PC-9 (cell line): ENCODE measurements at regions of chr7 and their contacts with region 1.

Region 1: DNA sequence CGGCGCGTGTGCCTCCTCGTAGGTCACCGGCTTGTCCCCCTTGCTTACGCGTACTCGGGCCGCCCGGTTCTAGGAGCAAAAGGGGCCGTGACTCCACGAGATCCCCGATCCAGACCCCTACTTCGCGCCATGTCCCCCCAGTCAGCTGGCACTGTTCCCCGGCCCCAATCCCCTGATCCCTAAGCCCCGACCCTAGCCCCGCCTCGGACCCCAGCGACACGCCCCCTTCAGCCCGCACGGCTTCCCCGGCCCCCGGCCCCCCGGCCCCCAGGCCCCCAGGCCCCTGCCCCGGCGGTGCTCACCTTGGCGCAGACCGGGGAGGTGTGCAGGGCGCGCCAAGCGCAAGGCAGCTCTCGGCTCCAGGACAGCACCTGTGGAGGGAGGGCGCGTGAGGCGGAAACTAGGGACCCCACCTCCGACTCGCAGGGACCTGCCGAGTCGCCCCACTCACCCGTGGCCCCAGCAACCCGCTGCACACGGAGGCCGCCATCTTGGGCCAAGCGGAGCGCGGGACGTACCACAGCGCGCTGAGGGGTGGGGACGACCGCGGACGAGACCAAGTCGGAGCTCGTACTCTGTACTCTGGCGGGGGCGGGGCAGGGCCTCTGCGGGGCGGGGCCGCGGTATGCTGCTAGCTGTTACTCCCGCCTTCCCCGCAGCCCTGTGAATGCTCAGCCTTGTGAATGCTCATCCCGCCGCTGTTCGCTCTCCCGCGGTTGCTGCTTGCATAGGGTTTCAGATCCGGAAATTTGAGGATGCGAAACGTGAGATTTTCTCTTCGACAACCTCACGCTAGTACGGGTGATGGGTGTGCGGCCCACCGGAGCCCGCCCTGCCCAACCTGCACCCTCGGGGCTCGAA is at the start of gene MRPS24:
- DNase-seq: peak; percentile 87 to 94
- H3K4me3 ChIP-seq: peak within 1 kb of the TSS; percentile 69
- H3K27ac ChIP-seq: peak within 1 kb of the TSS; percentile 95
- H3K4me1 ChIP-seq: peaks cover 58% of the 10 kb centered on the region
- H3K27me3 ChIP-seq: no peaks in the 10 kb centered on the region
- CTCF ChIP-seq: no peak
- total RNA-seq, gene MRPS24: 239 and 301 TPM in 2 replicates

Region 2: GRCh38 chr7:43808135-43808809 is 61.0 kb before region 1 on chr7:
- CTCF ChIA-PET with region 1: no interaction called
- POLR2A ChIA-PET with region 1: no interaction called
- intact Hi-C with region 1: no loop called
- DNase-seq: no peak
- H3K4me3 ChIP-seq: no peak overlapping the region
- H3K27ac ChIP-seq: no peak overlapping the region
- H3K4me1 ChIP-seq: no peaks in the 10 kb centered on the region
- H3K27me3 ChIP-seq: no peaks in the 10 kb centered on the region
- CTCF ChIP-seq: no peak

Region 3: DNA sequence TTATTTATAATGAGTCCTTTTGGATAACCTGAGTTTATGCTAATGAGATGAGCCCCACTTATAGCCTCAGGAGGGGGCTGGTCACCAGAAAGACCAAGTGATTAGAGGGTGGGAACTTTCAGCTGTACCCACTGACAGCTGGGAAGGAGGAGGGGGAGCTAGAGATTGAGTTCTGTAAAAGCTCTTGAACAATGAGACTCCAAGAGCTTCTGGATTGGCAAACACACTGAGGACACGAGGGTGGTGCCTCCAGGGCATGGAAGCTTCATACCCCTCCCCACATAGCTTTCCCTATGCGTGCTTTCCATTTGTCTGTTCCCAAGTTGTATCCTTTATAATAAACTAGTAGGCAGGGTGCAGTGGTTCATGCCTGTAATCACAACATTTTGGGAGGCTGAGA is 20.2 kb before region 1 on chr7:
- CTCF ChIA-PET with region 1: no interaction called
- POLR2A ChIA-PET with region 1: no interaction called
- intact Hi-C with region 1: loop called (anchors 2 kb)
- DNase-seq: no peak
- H3K4me3 ChIP-seq: no peak overlapping the region
- H3K27ac ChIP-seq: no peak overlapping the region
- H3K4me1 ChIP-seq: no peaks in the 10 kb centered on the region
- H3K27me3 ChIP-seq: no peaks in the 10 kb centered on the region
- CTCF ChIP-seq: no peak

Region 4: DNA sequence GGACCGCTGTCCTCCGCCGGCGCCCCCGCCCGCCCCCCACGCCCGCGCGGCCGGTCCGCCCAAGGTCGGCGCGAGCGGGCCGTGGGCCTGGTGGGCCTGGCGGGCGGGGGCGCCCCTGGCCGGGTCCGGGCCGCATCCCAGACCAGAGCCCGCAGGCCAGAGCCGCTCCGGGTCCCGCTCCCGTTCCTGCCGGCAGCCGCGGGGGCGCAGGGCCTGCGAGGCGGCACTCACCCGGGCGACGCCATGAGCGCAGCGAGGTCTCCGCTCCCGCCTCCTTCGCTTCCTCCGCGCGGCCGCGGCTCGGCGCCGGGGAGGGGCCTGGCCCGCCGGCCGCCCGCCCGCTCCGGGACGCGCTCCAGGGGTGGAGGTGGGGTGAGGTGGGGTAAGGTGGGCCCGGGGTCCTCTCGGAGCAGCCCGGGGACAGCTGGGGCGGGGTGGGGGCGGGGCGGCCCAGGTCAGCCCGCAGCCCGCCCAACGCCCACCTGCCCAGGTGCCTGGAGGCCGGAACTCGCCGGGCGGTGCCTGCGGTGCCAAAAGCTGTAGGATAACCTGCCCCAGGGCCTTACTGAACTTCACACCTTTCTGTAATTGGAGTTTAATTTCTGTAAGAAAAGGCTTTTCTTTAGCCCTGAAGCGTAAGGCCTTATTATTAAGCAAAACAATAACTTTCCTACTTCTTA is 37.2 kb after region 1 on chr7 and contains the start of gene URGCP:
- CTCF ChIA-PET with region 1: interaction called, 7 read pairs
- POLR2A ChIA-PET with region 1: interaction called, 22 read pairs
- intact Hi-C with region 1: loop called (anchors 1 kb)
- DNase-seq: peak; percentile 56 to 64
- H3K4me3 ChIP-seq: peak within 1 kb of the TSS; percentile 88
- H3K27ac ChIP-seq: peak within 1 kb of the TSS; percentile 77
- H3K4me1 ChIP-seq: peaks cover 40% of the 10 kb centered on the region
- H3K27me3 ChIP-seq: no peaks in the 10 kb centered on the region
- CTCF ChIP-seq: no peak
- total RNA-seq, gene URGCP: 45.7 and 49.5 TPM in 2 replicates

Region 5: GRCh38 chr7:43925984-43926797 is 57.0 kb after region 1 on chr7 and contains the start of gene UBE2D4:
- CTCF ChIA-PET with region 1: no interaction called
- POLR2A ChIA-PET with region 1: interaction called, 4 read pairs
- intact Hi-C with region 1: loop called (anchors 1 kb)
- DNase-seq: peak; percentile 87 to 92
- H3K4me3 ChIP-seq: peak within 1 kb of the TSS; percentile 84
- H3K27ac ChIP-seq: peak within 1 kb of the TSS; percentile 84
- H3K4me1 ChIP-seq: peaks cover 21% of the 10 kb centered on the region
- H3K27me3 ChIP-seq: no peaks in the 10 kb centered on the region
- CTCF ChIP-seq: no peak
- total RNA-seq, gene UBE2D4: 11.2 and 17.1 TPM in 2 replicates

Region 6: GRCh38 chr7:43942997-43943704 is 73.9 kb after region 1 on chr7:
- CTCF ChIA-PET with region 1: no interaction called
- POLR2A ChIA-PET with region 1: no interaction called
- intact Hi-C with region 1: loop called (anchors 5 kb)
- DNase-seq: peak; percentile 55 to 86
- H3K4me3 ChIP-seq: no peak overlapping the region
- H3K27ac ChIP-seq: no peak overlapping the region
- H3K4me1 ChIP-seq: peaks cover 23% of the 10 kb centered on the region
- H3K27me3 ChIP-seq: no peaks in the 10 kb centered on the region
- CTCF ChIP-seq: peak; percentile 68

Region 7: DNA sequence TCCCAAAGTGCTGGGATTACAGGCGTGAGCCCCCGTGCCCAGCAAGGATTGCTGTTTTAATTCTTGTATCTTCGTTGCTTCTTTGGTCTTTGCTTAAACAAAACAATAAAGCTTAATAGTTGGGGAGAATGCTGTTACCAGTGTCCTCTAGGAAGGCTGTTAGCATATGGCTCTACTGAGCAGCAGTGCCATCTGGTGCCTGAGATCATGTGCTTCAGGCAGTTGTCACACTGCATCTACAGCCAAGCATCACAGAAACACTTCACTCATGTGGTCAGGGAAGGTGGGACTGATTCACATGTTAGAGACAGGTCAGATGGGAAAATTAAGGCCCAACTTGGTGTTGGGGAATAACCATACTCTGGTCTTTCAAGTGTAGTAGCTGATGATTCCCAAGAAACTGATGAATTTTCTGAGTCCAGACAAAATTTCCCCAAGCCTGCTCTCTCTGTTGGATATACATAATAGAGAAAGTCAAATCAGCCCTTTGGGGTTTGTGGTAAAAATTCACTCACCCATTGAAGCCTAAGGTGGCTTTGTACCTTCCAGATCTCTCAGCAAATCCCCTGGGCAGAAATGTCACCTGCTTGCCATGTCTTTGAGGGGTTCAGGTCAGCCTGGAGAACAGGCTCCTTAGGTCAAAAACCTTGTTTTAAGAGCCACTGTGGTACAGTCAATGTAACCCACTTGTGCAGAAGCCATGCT is 85.4 kb after region 1 on chr7:
- CTCF ChIA-PET with region 1: interaction called, 3 read pairs
- POLR2A ChIA-PET with region 1: interaction called, 10 read pairs
- intact Hi-C with region 1: no loop called
- DNase-seq: peak; percentile 51 to 70
- H3K4me3 ChIP-seq: no peak overlapping the region
- H3K27ac ChIP-seq: no peak overlapping the region
- H3K4me1 ChIP-seq: no peaks in the 10 kb centered on the region
- H3K27me3 ChIP-seq: no peaks in the 10 kb centered on the region
- CTCF ChIP-seq: peak; percentile 84

Region 8: GRCh38 chr7:44044315-44045225 is 175.3 kb after region 1 on chr7 and contains the start of gene DBNL:
- CTCF ChIA-PET with region 1: no interaction called
- POLR2A ChIA-PET with region 1: no interaction called
- intact Hi-C with region 1: no loop called
- DNase-seq: peak; percentile 92 to 97
- H3K4me3 ChIP-seq: peak within 1 kb of the TSS; percentile 85
- H3K27ac ChIP-seq: no peak within 1 kb of the TSS
- H3K4me1 ChIP-seq: peaks cover 14% of the 10 kb centered on the region
- H3K27me3 ChIP-seq: no peaks in the 10 kb centered on the region
- CTCF ChIP-seq: no peak
- total RNA-seq, gene DBNL: 65.6 and 70.7 TPM in 2 replicates

Region 9: DNA sequence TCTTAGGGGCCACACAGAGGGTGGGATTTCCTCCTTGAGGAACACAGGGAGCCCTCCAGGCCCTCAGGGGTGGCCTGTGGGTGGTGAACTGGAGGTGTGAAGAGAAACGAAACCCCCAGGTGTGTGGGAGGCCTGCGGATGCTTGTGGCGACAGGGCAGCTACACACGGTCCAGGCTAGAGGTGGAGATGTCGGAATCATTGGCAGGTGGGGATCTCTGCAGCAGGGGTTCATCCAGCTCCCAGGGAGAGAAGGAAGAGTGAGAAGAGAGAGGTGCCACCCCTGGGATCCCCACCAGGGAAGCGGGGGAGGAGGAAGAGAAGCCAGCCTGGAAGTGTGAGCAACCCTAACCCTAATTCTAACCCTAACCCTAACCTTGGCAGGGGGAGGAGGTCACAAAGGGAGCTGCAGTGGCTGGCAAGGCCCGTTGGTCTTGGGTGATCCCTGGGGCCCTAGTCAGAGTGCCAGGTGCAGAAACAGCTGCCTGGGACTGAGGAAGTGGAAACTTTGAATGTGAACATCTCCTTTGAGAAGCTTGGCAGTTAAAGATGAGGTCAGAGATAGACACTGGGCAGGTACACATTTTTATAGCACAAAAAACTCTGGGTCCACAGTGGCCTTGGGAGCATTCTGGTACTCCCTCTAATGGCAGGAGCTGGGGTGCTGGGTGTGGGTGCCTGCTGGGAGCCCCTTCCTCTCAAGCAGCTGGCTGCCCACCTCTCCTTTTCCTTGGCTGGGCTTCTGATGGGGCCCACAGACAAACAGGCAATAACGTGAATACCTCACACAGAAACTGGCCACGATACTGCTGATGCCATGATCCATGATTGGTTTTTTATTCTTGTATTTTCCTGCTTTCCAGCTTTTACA is 228.1 kb after region 1 on chr7:
- CTCF ChIA-PET with region 1: no interaction called
- POLR2A ChIA-PET with region 1: no interaction called
- intact Hi-C with region 1: no loop called
- DNase-seq: no peak
- H3K4me3 ChIP-seq: no peak overlapping the region
- H3K27ac ChIP-seq: no peak overlapping the region
- H3K4me1 ChIP-seq: no peaks in the 10 kb centered on the region
- H3K27me3 ChIP-seq: no peaks in the 10 kb centered on the region
- CTCF ChIP-seq: no peak